AG04450 (cell line): ENCODE measurements at regions of chr1 and their contacts with region 1.

Region 1: DNA sequence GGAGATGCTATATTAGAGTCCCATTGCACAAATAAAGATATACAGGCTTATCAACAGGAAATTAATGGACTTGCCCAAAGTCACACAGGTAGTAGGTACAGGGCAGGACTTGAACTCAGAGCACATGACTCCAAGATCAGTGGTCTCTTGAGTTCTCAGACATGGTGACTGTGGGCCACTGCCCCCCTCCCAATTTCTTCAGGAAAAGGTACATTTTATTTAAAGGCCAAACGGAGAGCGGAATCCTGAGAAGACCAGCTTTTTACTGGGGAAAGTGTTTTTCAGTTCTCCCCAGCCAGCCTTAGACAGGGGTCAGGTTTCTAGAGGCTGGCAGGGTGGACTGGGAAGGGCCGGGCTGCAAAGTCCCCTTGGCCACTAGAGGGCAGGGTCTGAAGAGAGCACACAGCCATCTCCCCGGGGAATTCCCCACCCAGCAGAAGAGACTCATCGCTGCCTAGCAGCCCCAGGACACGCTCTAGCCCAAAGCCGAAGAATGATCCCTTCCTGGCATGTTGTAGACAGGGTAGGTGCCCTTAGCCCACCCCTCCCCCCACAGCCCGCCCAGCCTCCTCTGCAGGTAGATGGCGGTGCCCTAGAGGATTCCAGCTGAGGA is 29.7 kb downstream of the ACP6 start:
- DNase-seq: peak; percentile 65
- H3K4me3 ChIP-seq: no peak overlapping the region
- H3K27ac ChIP-seq: no peak overlapping the region
- H3K27me3 ChIP-seq: no peaks in the 10 kb centered on the region
- CTCF ChIP-seq: peak; percentile 94

Region 2: GRCh38 chr1:147287133-147287865 is 353.4 kb before region 1 on chr1:
- CTCF ChIA-PET with region 1: no interaction called
- POLR2A ChIA-PET with region 1: no interaction called
- DNase-seq: no peak
- H3K4me3 ChIP-seq: no peak overlapping the region
- H3K27ac ChIP-seq: no peak overlapping the region
- H3K27me3 ChIP-seq: no peaks in the 10 kb centered on the region
- CTCF ChIP-seq: no peak

Region 3: GRCh38 chr1:147494998-147495580 is 145.6 kb before region 1 on chr1:
- CTCF ChIA-PET with region 1: interaction called, 47 read pairs
- POLR2A ChIA-PET with region 1: no interaction called
- DNase-seq: peak; percentile 43
- H3K4me3 ChIP-seq: no peak overlapping the region
- H3K27ac ChIP-seq: no peak overlapping the region
- H3K27me3 ChIP-seq: peaks cover 7% of the 10 kb centered on the region
- CTCF ChIP-seq: peak; percentile 99

Region 4: GRCh38 chr1:147605591-147605990 is 35.1 kb before region 1 on chr1:
- CTCF ChIA-PET with region 1: interaction called, 12 read pairs
- POLR2A ChIA-PET with region 1: no interaction called
- DNase-seq: no peak
- H3K4me3 ChIP-seq: no peak overlapping the region
- H3K27ac ChIP-seq: no peak overlapping the region
- H3K27me3 ChIP-seq: no peaks in the 10 kb centered on the region
- CTCF ChIP-seq: no peak

Region 5: DNA sequence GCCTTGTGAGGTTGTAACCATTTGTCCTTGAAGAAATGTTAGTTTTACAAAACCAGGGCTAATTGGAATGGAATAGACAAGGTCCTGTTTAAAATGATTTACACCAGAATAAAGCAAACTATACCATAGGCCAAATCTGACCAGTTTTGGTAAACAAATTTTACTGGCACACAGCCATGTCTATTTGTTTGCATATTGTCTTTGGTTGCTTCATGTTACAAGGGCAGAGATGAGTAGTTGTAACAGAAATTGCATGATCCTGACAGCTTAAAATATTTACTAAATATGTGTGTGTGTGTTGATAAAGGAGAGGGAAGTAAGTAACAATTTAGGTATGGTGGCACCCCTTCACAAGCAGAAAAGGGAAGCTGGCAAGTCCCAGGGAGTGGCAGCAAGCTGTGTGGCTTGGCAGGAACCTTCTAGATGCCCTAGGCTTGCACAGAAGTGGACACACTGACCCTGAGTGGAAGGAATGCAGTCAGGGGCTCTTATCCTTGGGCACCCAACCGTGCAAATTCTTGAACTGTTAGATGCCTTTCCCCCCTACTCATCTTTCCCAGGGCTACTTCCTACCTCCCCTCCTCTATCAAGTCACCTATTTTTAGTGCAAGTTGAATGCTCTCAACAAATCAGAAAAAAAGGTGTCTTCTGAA is 10.7 kb after region 1 on chr1:
- CTCF ChIA-PET with region 1: interaction called, 33 read pairs
- POLR2A ChIA-PET with region 1: no interaction called
- DNase-seq: no peak
- H3K4me3 ChIP-seq: no peak overlapping the region
- H3K27ac ChIP-seq: no peak overlapping the region
- H3K27me3 ChIP-seq: no peaks in the 10 kb centered on the region
- CTCF ChIP-seq: no peak

Region 6: DNA sequence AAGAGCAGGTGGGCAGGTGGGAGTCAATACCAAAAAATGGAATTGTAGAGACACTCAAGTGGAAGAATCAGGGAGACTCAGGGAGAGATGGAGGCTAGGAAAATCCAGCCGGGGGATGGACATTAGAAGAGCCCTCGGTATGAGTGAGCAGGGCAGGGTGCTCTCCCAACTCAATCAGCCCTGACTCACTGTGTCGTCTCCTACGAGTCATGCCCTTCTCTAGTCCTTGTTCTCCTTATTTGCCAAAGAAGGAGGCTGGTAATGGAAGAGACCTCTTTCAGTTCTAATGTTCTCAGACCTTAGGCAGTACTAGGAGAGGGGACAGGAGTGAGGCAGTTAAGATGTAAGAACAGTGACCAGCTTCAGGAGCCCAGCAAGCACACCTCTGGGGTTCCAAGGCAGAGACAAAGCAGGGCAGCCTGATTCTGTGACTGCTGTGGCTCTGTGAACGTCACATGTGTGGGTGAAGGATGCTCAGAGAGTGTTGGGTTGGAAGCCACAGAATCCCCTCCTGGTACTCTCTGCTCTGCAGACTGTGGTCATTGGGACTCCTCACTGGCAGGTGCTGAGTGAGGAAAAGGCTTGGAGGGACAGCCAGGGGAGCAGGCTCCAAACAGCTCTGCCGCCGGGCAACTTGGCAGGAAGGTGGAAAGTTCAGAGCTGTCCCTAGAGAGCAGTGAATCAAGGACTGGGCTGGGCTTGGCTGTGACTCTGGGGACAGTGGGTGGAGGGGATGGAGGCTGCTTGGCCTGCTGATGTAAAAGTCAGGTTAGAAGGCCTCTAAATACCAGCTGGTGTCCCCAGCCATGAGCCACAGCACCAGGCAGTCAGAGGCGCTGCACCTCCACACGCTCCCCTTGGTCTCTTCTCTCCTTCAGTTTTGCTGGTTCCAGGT is 130.8 kb after region 1 on chr1:
- CTCF ChIA-PET with region 1: no interaction called
- POLR2A ChIA-PET with region 1: no interaction called
- DNase-seq: no peak
- H3K4me3 ChIP-seq: no peak overlapping the region
- H3K27ac ChIP-seq: no peak overlapping the region
- H3K27me3 ChIP-seq: peaks cover 8% of the 10 kb centered on the region
- CTCF ChIP-seq: no peak

Region 7: GRCh38 chr1:147892731-147893214 is 252.1 kb after region 1 on chr1:
- CTCF ChIA-PET with region 1: interaction called, 22 read pairs
- POLR2A ChIA-PET with region 1: no interaction called
- DNase-seq: peak; percentile 24
- H3K4me3 ChIP-seq: no peak overlapping the region
- H3K27ac ChIP-seq: no peak overlapping the region
- H3K27me3 ChIP-seq: peaks cover 11% of the 10 kb centered on the region
- CTCF ChIP-seq: peak; percentile 99